GM13976 (cell line): ENCODE measurements at regions of chr3 and their contacts with region 1.

Region 1: GRCh38 chr3:132343018-132343612 is 25.9 kb downstream of the ACP3 start:
- DNase-seq: peak; percentile 38
- CTCF ChIP-seq: peak; percentile 65

Region 2: DNA sequence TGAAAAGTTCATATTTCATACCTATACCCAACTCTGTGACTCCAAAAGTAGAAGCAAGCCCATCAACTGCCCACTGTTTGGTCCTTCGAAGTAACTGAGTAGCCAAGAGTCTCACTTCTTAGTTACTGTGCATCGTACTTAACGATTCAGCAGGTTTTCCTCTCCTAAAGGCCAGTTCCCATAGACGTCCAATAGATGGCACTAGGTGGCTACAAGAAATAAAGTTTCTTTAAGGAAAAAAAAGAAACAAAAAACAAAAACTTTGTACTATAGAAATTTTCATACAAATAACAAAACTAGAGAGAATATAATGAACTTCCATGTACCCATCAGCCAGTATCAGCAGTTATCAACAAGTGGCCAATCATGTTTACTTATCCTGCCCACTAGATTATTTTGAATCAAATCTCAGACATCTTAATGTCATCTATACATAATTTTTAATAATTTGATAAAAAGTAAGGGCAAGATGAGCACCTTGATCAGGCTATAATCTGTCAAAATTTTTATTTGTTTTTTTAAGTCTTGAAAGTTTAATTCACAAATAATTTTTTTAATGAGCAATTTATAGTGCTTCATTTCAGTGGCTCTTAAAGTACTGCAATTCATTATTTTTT is 89.7 kb before region 1 on chr3:
- in situ Hi-C with region 1: loop called (anchors 10 kb)
- DNase-seq: peak; percentile 47
- CTCF ChIP-seq: peak; percentile 69

Region 3: GRCh38 chr3:132445817-132446216 is 102.7 kb after region 1 on chr3:
- in situ Hi-C with region 1: no loop called
- DNase-seq: no peak
- CTCF ChIP-seq: no peak